ENCODE measurements at regions of chr1 and their contacts with region 1.

Region 1: GRCh38 chr1:150661156-150661555 is 31.7 kb upstream of the ENSA start:
- DNase-seq: no peak
- ATAC-seq: no peak
- H3K4me3 ChIP-seq: no peak overlapping the region
- H3K4me3 Mint-ChIP-seq: no peak overlapping the region
- H3K27ac ChIP-seq: no peak overlapping the region
- H3K27ac Mint-ChIP-seq: no peak overlapping the region
- H3K4me1 ChIP-seq: no peaks in the 10 kb centered on the region
- H3K4me1 Mint-ChIP-seq: peaks cover 6% of the 10 kb centered on the region
- H3K27me3 ChIP-seq: no peaks in the 10 kb centered on the region
- H3K27me3 Mint-ChIP-seq: no peaks in the 10 kb centered on the region
- CTCF ChIP-seq: no peak

Region 2: DNA sequence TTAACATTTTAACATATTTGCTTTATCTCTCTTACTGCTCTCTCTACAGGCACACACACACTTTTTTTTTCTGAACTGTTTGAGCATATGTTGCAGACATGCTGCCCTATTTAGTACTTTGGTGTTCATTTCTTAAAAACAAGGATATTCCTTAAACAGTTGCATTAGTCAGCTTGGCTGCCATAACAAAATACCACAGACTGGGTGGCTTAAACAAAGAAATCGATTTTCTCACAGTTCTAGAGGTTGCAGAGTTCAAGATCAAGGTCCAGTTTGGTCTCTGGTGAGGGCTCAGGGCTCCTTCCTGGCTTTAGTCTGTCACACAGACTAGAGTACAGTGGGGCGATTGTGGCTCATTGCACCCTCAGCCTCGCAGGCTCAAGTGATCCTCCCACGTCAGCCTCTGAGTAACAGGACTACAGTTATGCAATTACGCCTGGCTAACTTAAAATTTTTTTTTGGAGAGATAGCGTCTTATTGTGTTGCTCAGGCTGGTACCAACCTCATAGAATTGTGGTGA is 250.5 kb before region 1 on chr1:
- CTCF ChIA-PET with region 1: no interaction called
- POLR2A ChIA-PET with region 1: no interaction called
- intact Hi-C with region 1: loop called in 1 of 2 experiments (anchors 10 kb)
- DNase-seq: no peak
- ATAC-seq: no peak
- H3K4me3 ChIP-seq: no peak overlapping the region
- H3K4me3 Mint-ChIP-seq: no peak overlapping the region
- H3K27ac ChIP-seq: no peak overlapping the region
- H3K27ac Mint-ChIP-seq: peak overlapping the region; percentile 25
- H3K4me1 ChIP-seq: peaks cover 7% of the 10 kb centered on the region
- H3K4me1 Mint-ChIP-seq: peaks cover 75% of the 10 kb centered on the region
- H3K27me3 ChIP-seq: no peaks in the 10 kb centered on the region
- H3K27me3 Mint-ChIP-seq: no peaks in the 10 kb centered on the region
- CTCF ChIP-seq: no peak

Region 3: DNA sequence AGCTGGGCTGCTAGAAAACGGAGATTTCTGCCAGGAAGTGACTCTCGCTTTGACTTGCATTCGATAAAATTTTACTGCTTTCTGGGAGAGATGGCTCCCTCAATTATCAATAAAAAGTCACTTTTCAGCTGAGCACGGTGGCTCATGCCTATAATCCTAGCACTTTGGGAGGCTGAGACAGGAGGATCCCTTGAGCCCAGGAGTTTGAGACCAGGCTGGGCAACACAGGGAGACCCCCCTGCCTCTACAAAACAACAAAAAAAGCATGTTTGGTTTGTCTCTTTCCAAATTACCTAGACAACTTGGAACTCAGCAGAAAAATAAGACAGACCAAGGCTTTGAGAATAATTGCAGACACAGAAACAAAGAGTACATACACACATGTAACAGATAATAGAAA is 18.9 kb before region 1 on chr1:
- CTCF ChIA-PET with region 1: no interaction called
- POLR2A ChIA-PET with region 1: no interaction called
- intact Hi-C with region 1: loop called in 1 of 2 experiments (anchors 2 kb)
- DNase-seq: no peak
- ATAC-seq: no peak
- H3K4me3 ChIP-seq: no peak overlapping the region
- H3K4me3 Mint-ChIP-seq: no peak overlapping the region
- H3K27ac ChIP-seq: no peak overlapping the region
- H3K27ac Mint-ChIP-seq: no peak overlapping the region
- H3K4me1 ChIP-seq: no peaks in the 10 kb centered on the region
- H3K4me1 Mint-ChIP-seq: no peaks in the 10 kb centered on the region
- H3K27me3 ChIP-seq: no peaks in the 10 kb centered on the region
- H3K27me3 Mint-ChIP-seq: no peaks in the 10 kb centered on the region
- CTCF ChIP-seq: no peak

Measured in CD4-positive, alpha-beta T cell (primary cell).